ENCODE measurements at regions of chr13 and their contacts with region 1.

Region 1: DNA sequence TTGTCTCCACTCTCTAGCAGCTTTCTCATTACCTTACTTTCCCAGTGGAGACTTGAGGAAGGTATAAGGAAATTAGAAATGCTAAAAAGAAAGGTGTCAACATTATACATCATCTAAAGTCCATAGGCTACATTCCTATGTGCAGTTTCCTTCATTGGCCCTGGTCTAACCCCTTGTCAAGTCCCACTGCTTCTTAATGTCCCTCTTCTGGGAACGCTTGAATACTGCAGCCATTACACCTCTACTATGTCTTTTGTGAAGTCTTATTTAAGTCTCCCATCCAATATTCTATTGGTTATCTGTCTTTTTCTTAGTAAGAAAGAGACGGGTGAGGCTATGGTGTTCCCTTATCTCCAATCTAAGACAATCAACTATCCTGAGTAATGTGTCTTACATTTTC is 332.6 kb upstream of the TMTC4 start:
- DNase-seq: no peak
- ATAC-seq: no peak
- H3K4me3 ChIP-seq: no peak overlapping the region
- H3K27ac ChIP-seq: no peak overlapping the region
- H3K4me1 ChIP-seq: no peaks in the 10 kb centered on the region
- H3K27me3 ChIP-seq: no peaks in the 10 kb centered on the region
- CTCF ChIP-seq: no peak
- POLR2A ChIP-seq: no peak
- RAD21 ChIP-seq: no peak

Region 2: DNA sequence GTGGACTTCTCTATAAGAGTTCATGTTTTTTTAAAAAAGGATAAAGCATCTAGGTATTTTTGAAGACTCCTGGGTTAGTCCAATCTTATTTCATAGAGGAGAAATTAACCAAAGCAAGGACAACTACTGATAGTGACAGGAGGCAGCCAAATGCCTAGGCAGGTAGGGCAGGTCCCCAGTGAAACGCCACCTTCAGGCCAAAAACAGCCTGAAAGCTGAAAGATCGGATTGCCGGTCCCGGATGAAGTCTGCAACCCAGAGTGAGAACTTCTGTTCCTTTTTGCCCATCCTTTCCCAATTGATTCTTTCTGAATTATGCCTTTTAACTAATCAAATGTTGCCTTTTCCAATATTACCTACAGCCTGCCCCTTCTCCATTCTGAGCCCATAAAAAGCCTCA is 412.5 kb before region 1 on chr13:
- CTCF ChIA-PET with region 1: no interaction called
- POLR2A ChIA-PET with region 1: no interaction called
- dilution Hi-C with region 1: no loop called
- in situ Hi-C with region 1: no loop called
- intact Hi-C with region 1: loop called (anchors 10 kb)
- DNase-seq: no peak
- ATAC-seq: no peak
- H3K4me3 ChIP-seq: no peak overlapping the region
- H3K27ac ChIP-seq: no peak overlapping the region
- H3K4me1 ChIP-seq: no peaks in the 10 kb centered on the region
- H3K27me3 ChIP-seq: peaks cover 6% of the 10 kb centered on the region
- CTCF ChIP-seq: 0 out of 2 replicates have a peak, but pooled peaks have one; percentile 2
- POLR2A ChIP-seq: no peak
- RAD21 ChIP-seq: no peak

Region 3: DNA sequence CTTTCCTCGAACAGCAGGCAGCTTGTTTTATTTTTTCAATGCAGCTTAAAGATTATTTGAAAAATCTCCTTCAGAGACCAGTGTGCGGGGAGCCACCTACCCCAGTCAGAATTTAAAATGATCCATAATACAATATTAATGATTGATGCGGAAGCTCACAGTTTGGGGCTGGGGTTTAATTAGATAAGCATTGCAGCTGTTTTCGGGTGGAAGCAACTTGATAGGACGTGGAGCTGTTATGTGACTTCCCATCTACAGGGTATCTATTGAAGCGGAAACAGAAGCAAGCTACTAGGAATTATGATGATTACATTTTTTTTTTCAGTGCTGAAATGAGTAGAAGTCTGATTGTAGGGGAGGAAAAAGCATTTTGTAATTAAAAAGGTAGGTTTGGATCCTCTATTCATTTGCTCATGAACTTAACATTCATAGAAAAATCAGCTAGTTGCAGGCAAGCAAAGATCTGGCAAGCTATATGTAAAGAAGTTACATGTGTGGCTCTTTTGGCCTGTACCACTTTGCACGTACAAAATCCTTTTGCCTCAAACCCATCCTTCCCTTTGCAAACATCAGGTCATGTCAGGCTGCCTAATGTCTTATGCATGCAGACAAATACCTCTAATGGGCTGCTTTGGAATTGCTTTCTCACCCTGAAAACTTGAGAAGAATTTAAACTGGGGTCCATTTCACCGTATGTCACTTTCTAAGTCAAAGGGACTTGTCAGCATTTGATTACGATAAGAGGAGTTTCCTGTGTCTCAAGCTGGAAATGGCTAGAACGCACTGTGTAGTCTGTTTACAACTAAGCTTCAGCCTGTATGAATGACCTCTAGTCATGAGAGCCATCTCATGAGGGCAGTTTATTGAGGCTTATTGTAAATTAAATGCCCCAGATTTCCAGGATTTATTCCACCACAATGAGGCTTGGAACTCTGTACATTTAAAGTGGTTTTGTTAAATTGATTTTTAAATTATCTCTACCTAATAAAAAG is 65.6 kb before region 1 on chr13:
- CTCF ChIA-PET with region 1: no interaction called
- POLR2A ChIA-PET with region 1: no interaction called
- dilution Hi-C with region 1: no loop called
- in situ Hi-C with region 1: no loop called
- intact Hi-C with region 1: no loop called
- DNase-seq: peak; percentile 1
- ATAC-seq: no peak
- H3K4me3 ChIP-seq: no peak overlapping the region
- H3K27ac ChIP-seq: no peak overlapping the region
- H3K4me1 ChIP-seq: no peaks in the 10 kb centered on the region
- H3K27me3 ChIP-seq: no peaks in the 10 kb centered on the region
- CTCF ChIP-seq: no peak
- POLR2A ChIP-seq: no peak
- RAD21 ChIP-seq: no peak

Region 4: GRCh38 chr13:101202590-101202989 is 195.3 kb after region 1 on chr13:
- CTCF ChIA-PET with region 1: no interaction called
- POLR2A ChIA-PET with region 1: no interaction called
- dilution Hi-C with region 1: no loop called
- in situ Hi-C with region 1: no loop called
- intact Hi-C with region 1: no loop called
- DNase-seq: no peak
- ATAC-seq: no peak
- H3K4me3 ChIP-seq: no peak overlapping the region
- H3K27ac ChIP-seq: no peak overlapping the region
- H3K4me1 ChIP-seq: 0 out of 2 replicates have a peak, but pooled peaks cover 2% of the 10 kb centered on the region
- H3K27me3 ChIP-seq: no peaks in the 10 kb centered on the region
- CTCF ChIP-seq: no peak
- POLR2A ChIP-seq: no peak
- RAD21 ChIP-seq: no peak

Measured in IMR-90 (cell line).